Caco-2 (cell line): ENCODE measurements at regions of chr4 and their contacts with region 1.

Region 1: GRCh38 chr4:184347251-184348239 is 126.8 kb downstream of the IRF2 start:
- DNase-seq: peak in 1 of 2 experiments; percentile 29
- H3K4me3 ChIP-seq: no peak overlapping the region
- H3K4me3 Mint-ChIP-seq: peak overlapping the region; percentile 71
- H3K27ac Mint-ChIP-seq: peak overlapping the region; percentile 94
- H3K4me1 ChIP-seq: peaks cover 36% of the 10 kb centered on the region
- H3K4me1 Mint-ChIP-seq: peaks cover 42% of the 10 kb centered on the region
- H3K27me3 ChIP-seq: no peaks in the 10 kb centered on the region
- H3K27me3 Mint-ChIP-seq: no peaks in the 10 kb centered on the region
- CTCF ChIP-seq: no peak

Region 2: DNA sequence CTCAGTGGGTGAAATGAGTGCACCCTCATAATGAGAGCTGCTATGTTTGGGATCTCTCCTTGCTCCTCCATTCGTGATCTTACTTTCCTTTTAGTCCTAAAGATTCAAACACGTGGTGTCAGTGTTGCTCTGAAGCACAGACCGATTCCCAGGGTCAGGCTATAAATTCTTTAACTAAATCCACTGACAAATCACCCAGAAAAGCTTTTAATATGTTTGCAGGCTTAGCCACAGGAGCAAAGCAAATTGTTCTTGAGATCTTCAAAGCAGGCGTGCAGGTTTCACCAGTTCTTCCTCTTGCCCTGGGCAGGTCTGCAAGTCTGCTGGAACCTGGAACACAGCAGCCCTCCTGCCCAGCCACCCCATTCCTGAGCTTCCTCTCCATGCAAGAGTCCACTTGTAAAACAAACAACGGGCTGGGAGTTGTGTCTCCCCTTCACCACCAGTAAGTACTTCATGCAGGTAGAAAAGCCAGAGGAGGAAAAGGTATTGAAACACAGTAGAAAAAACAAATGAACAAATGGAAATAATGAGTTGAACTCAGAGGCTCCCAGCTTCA is 59.8 kb before region 1 on chr4:
- CTCF ChIA-PET with region 1: interaction called, 7 read pairs
- POLR2A ChIA-PET with region 1: interaction called, 5 read pairs
- intact Hi-C with region 1: loop called (anchors 1 kb)
- DNase-seq: peak; percentile 82 to 83
- H3K4me3 ChIP-seq: no peak overlapping the region
- H3K4me3 Mint-ChIP-seq: peak overlapping the region; percentile 27
- H3K27ac Mint-ChIP-seq: peak overlapping the region; percentile 62
- H3K4me1 ChIP-seq: peaks cover 18% of the 10 kb centered on the region
- H3K4me1 Mint-ChIP-seq: peaks cover 13% of the 10 kb centered on the region
- H3K27me3 ChIP-seq: no peaks in the 10 kb centered on the region
- H3K27me3 Mint-ChIP-seq: no peaks in the 10 kb centered on the region
- CTCF ChIP-seq: no peak

Region 3: GRCh38 chr4:184364100-184364921 is 16.8 kb after region 1 on chr4:
- CTCF ChIA-PET with region 1: interaction called, 3 read pairs
- POLR2A ChIA-PET with region 1: interaction called, 4 read pairs
- intact Hi-C with region 1: loop called (anchors 1 kb)
- DNase-seq: peak; percentile 53 to 58
- H3K4me3 ChIP-seq: no peak overlapping the region
- H3K4me3 Mint-ChIP-seq: peak overlapping the region; percentile 5
- H3K27ac Mint-ChIP-seq: peak overlapping the region; percentile 53
- H3K4me1 ChIP-seq: peaks cover 11% of the 10 kb centered on the region
- H3K4me1 Mint-ChIP-seq: peaks cover 15% of the 10 kb centered on the region
- H3K27me3 ChIP-seq: no peaks in the 10 kb centered on the region
- H3K27me3 Mint-ChIP-seq: no peaks in the 10 kb centered on the region
- CTCF ChIP-seq: no peak

Region 4: DNA sequence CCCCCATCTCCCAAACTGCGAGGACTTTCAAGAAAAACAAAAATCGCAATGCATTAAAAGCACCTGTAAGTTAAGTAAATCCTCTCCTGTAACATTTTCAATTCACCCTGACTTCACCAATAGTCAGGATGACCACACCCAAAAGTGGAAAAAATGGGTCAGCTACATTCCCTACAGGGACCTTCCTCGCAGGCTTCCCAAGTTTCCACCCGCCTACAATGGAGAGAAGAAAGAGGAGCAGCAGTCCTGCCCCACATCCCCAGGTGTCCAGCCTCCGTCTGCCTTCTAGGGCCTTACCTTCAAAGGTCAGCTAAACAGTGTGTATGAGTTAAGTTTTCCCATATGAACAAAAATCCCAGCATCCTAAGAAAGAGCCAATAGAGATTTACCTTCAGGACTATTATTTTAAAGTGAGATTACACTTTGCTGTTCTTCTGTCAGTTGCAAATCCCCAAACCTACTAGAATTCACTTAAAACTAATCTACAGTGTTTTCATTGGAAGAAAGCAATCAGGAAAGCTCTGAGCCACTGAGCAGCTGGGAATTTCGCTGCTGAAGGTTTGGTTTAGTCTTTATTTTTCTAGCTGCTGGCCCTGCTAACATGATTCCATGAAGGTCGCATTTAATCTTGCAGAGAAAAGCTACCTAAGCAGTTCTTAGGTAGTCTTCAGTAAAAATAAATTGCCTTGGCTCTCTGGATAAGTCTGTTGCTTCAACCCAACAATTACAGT is 114.3 kb after region 1 on chr4:
- CTCF ChIA-PET with region 1: no interaction called
- POLR2A ChIA-PET with region 1: no interaction called
- intact Hi-C with region 1: loop called (anchors 1 kb)
- DNase-seq: no peak
- H3K4me3 ChIP-seq: no peak overlapping the region
- H3K4me3 Mint-ChIP-seq: no peak overlapping the region
- H3K27ac Mint-ChIP-seq: peak overlapping the region; percentile 57
- H3K4me1 ChIP-seq: peaks cover 32% of the 10 kb centered on the region
- H3K4me1 Mint-ChIP-seq: peaks cover 36% of the 10 kb centered on the region
- H3K27me3 ChIP-seq: no peaks in the 10 kb centered on the region
- H3K27me3 Mint-ChIP-seq: no peaks in the 10 kb centered on the region
- CTCF ChIP-seq: no peak

Region 5: DNA sequence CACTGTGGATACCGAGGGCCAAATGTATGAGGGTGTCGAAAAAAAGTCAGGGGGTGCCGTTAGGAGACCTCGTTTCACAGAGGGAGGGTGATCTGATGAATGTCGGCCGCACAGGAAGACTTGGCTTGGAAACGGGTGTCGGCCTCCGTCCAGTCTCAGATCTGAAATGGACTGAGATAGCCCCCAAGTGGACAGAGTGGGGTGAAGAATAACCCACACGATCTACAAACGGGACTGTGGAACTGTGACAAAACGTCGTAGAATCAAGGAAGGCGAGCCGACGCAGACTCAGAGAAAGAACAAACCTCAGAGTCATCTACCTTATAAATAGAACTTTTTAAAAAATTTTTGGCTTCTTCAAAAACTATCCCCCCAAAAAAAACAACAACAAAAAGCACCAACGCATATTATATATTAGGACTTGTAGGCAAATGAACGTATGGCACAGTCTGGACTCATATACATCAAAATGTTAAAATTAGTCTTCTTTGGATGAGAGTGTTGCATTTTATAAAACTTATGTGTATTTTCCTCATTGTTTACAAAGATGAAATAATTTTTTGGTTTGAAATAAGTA is 190.6 kb after region 1 on chr4:
- CTCF ChIA-PET with region 1: interaction called, 6 read pairs
- POLR2A ChIA-PET with region 1: interaction called, 6 read pairs
- intact Hi-C with region 1: loop called (anchors 1 kb)
- DNase-seq: peak; percentile 83
- H3K4me3 ChIP-seq: peak overlapping the region; percentile 39
- H3K4me3 Mint-ChIP-seq: peak overlapping the region; percentile 86
- H3K27ac Mint-ChIP-seq: peak overlapping the region; percentile 90
- H3K4me1 ChIP-seq: peaks cover 16% of the 10 kb centered on the region
- H3K4me1 Mint-ChIP-seq: peaks cover 23% of the 10 kb centered on the region
- H3K27me3 ChIP-seq: no peaks in the 10 kb centered on the region
- H3K27me3 Mint-ChIP-seq: no peaks in the 10 kb centered on the region
- CTCF ChIP-seq: peak; percentile 63 to 67